ENCODE measurements at regions of chr14 and their contacts with region 1.

Region 1: DNA sequence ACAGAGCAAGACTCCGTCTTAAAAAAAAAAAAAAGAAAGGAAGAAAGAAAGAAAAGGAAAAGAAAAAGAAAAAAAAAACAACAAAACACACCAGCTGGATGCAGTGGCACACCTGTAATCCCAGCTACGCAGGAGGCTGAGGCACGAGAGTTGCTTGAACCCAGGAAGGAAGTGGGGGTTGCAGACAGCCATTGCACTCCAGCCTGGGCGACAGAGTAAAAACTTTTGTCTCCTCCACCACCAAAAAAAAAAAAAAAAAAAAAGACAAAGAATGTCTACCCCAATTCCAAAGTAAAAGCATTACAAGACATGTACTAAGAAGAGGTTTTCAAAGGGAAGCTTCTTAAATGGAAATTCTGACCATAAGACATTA is 53.4 kb downstream of the HNRNPC start:
- DNase-seq: no peak
- H3K4me3 ChIP-seq: no peak overlapping the region
- H3K27ac ChIP-seq: no peak overlapping the region
- H3K4me1 ChIP-seq: peaks cover 25% of the 10 kb centered on the region
- H3K27me3 ChIP-seq: no peaks in the 10 kb centered on the region
- CTCF ChIP-seq: no peak
- POLR2A ChIP-seq: no peak

Region 2: DNA sequence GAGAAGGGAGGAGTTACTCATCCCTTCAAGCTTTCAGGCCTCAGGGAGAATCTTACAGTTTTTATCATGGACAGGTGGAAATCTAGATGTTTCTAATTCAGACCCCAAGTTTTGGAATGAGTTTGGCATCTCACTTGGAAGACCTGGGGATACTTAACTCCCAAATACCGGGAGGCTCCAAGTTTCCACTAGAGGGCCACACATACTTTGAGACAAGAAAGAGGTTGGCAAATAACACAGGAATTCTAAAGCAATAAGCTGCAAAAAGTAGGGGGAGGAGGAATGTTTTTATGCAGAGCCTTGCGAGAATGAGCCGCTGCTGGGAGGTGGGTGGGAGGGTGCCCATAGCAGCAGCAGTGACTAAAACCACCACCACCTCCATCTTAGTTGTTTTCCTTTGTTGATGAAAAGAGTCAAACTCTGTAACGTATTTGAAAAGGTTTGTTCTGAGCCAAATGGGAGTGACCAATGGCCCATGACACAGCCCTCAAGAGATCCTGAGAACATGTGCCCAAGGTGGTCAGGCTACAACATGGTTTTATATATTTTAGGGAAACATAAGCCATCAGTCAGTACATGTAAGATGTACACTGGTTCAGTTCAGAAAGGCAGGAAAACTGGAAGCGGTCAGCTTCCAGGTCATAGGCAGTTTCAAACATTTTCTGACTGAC is 379.1 kb before region 1 on chr14:
- CTCF ChIA-PET with region 1: no interaction called
- POLR2A ChIA-PET with region 1: no interaction called
- dilution Hi-C with region 1: no loop called
- intact Hi-C with region 1: no loop called
- DNase-seq: peak; percentile 47
- H3K4me3 ChIP-seq: no peak overlapping the region
- H3K27ac ChIP-seq: no peak overlapping the region
- H3K4me1 ChIP-seq: no peaks in the 10 kb centered on the region
- H3K27me3 ChIP-seq: no peaks in the 10 kb centered on the region
- CTCF ChIP-seq: peak; percentile 42 to 55
- POLR2A ChIP-seq: no peak

Region 3: GRCh38 chr14:21056520-21057163 is 159.2 kb before region 1 on chr14:
- CTCF ChIA-PET with region 1: no interaction called
- POLR2A ChIA-PET with region 1: no interaction called
- dilution Hi-C with region 1: no loop called
- intact Hi-C with region 1: no loop called
- DNase-seq: no peak
- H3K4me3 ChIP-seq: no peak overlapping the region
- H3K27ac ChIP-seq: no peak overlapping the region
- H3K4me1 ChIP-seq: no peaks in the 10 kb centered on the region
- H3K27me3 ChIP-seq: peaks cover 12 to 19% of the 10 kb centered on the region in 2 experiments
- CTCF ChIP-seq: no peak
- POLR2A ChIP-seq: no peak

Region 4: GRCh38 chr14:21262410-21262809 is 46.5 kb after region 1 on chr14:
- CTCF ChIA-PET with region 1: no interaction called
- POLR2A ChIA-PET with region 1: interaction called, 14 read pairs
- dilution Hi-C with region 1: no loop called
- intact Hi-C with region 1: no loop called
- DNase-seq: no peak
- H3K4me3 ChIP-seq: no peak overlapping the region
- H3K27ac ChIP-seq: no peak overlapping the region
- H3K4me1 ChIP-seq: peaks cover 43% of the 10 kb centered on the region
- H3K27me3 ChIP-seq: no peaks in the 10 kb centered on the region
- CTCF ChIP-seq: no peak
- POLR2A ChIP-seq: no peak